B cell (primary cell): ENCODE measurements at regions of chr12 and their contacts with region 1.

Region 1: DNA sequence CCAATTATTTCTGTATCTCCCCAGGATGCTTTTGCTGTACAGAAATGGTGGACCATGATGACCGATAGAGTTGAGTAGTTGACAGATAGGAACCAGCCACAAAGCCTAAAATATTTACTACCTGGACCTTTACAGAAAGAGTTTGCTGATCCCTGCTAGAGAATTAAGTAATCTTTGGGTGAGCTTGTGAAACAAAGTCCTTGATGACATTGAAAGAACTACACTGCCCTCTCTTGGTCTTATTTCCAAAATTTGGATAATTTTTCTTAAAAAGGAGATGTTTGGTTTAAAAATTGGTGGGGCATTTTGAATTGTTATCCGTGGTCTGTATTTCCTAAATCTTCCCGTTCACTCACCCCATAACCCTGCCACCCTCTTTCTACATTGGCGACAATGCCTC is 13.7 kb upstream of the TCTN1 start:
- DNase-seq: peak; percentile 76
- ATAC-seq: peak; percentile 35
- H3K4me3 ChIP-seq: no peak overlapping the region
- H3K4me3 Mint-ChIP-seq: peak overlapping the region; percentile 7
- H3K27ac ChIP-seq: peak overlapping the region in 1 of 2 donors; percentile 43
- H3K27ac Mint-ChIP-seq: peak overlapping the region; percentile 75
- H3K4me1 ChIP-seq: peaks cover 45 to 53% of the 10 kb centered on the region in 2 donors
- H3K4me1 Mint-ChIP-seq: peaks cover 37% of the 10 kb centered on the region
- H3K27me3 ChIP-seq: no peaks in the 10 kb centered on the region
- H3K27me3 Mint-ChIP-seq: no peaks in the 10 kb centered on the region
- CTCF ChIP-seq: peak; percentile 63

Region 2: DNA sequence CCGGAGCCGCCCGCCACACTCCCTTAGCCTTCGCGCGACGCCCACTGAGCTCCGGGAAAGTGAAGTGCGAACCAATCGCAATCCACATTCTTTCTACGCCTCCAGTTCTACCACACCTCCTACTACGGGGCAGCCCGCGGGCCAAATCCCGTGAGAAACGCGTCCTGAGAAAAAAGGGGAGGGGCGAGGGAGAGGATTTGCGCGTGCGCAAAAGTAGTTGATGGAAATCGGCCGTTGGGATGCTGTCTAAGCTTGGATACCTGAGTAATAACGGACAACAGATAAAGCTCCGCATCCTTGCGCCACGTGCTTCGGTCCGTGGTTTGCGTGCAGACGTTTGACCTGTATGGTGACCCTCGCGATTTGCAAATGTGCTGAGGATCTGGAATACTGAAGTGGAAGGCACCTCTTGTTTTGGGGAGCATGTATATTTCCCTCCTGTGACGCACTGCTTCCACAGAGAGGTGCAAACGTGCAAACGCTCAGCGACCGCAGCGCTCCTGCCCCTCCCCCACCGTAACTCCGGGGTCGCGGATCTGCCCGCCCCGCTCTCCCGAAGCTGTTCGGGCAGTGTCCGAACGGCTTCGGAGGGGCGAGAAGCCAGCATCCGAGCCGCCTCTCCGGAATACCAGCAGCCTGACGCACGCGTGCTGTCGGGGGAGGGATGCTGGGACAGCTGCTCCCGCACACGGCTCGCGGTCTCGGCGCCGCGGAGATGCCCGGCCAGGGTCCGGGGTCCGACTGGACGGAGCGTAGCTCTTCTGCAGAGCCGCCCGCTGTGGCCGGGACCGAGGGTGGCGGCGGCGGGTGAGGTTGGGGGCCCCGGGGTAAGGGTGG is 131.8 kb before region 1 on chr12 and contains the starts of genes FAM216A and GPN3:
- CTCF ChIA-PET with region 1: interaction called, 80 read pairs
- POLR2A ChIA-PET with region 1: interaction called, 6 read pairs
- intact Hi-C with region 1: loop called (anchors 1 kb)
- DNase-seq: peak; percentile 97
- ATAC-seq: peak; percentile 91
- H3K4me3 ChIP-seq: peak within 1 kb of the TSS; percentile 72 to 100 (median 95)
- H3K4me3 Mint-ChIP-seq: peak within 1 kb of the TSS; percentile 100
- H3K27ac ChIP-seq: peak within 1 kb of the TSS; percentile 69 to 79
- H3K27ac Mint-ChIP-seq: peak within 1 kb of the TSS; percentile 98
- H3K4me1 ChIP-seq: peaks cover 22 to 24% of the 10 kb centered on the region in 2 donors
- H3K4me1 Mint-ChIP-seq: peaks cover 42% of the 10 kb centered on the region
- H3K27me3 ChIP-seq: no peaks in the 10 kb centered on the region
- H3K27me3 Mint-ChIP-seq: no peaks in the 10 kb centered on the region
- CTCF ChIP-seq: no peak
- total RNA-seq, gene FAM216A: 15.4 and 15.7 TPM in 2 replicates
- total RNA-seq, gene GPN3: 12.3 and 13.4 TPM in 2 replicates

Region 3: GRCh38 chr12:110531741-110532333 is 68.4 kb before region 1 on chr12:
- CTCF ChIA-PET with region 1: interaction called, 22 read pairs
- POLR2A ChIA-PET with region 1: interaction called, 10 read pairs
- intact Hi-C with region 1: no loop called
- DNase-seq: no peak
- ATAC-seq: no peak
- H3K4me3 ChIP-seq: no peak overlapping the region
- H3K4me3 Mint-ChIP-seq: no peak overlapping the region
- H3K27ac ChIP-seq: peak overlapping the region in 1 of 2 donors; percentile 2
- H3K27ac Mint-ChIP-seq: peak overlapping the region; percentile 22
- H3K4me1 ChIP-seq: peaks cover 0 to 3% of the 10 kb centered on the region in 2 donors
- H3K4me1 Mint-ChIP-seq: peaks cover 20% of the 10 kb centered on the region
- H3K27me3 ChIP-seq: no peaks in the 10 kb centered on the region
- H3K27me3 Mint-ChIP-seq: no peaks in the 10 kb centered on the region
- CTCF ChIP-seq: no peak

Region 4: DNA sequence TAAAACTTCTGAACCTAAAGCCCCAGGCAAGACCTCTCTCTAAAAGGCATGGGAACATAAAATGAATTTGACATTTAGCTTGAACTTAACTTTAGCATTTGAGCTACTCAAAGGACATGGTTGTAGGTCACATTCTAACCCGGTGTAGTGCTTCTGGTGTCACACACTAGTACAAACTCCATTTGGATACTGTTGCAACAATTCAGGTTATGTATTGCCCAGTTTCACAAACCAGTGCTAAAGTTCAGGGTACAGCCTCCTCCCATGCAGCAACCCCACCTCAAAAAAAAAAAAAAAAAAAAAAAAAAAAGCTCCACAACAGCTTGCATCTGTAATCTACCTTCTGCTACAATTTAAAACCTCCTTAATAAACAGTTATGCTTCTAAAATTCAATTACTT is 24.9 kb before region 1 on chr12:
- CTCF ChIA-PET with region 1: interaction called, 39 read pairs
- POLR2A ChIA-PET with region 1: no interaction called
- intact Hi-C with region 1: no loop called
- DNase-seq: no peak
- ATAC-seq: no peak
- H3K4me3 ChIP-seq: no peak overlapping the region
- H3K4me3 Mint-ChIP-seq: peak overlapping the region; percentile 45
- H3K27ac ChIP-seq: peak overlapping the region in 1 of 2 donors; percentile 46
- H3K27ac Mint-ChIP-seq: peak overlapping the region; percentile 50
- H3K4me1 ChIP-seq: peaks cover 33 to 41% of the 10 kb centered on the region in 2 donors
- H3K4me1 Mint-ChIP-seq: peaks cover 53% of the 10 kb centered on the region
- H3K27me3 ChIP-seq: no peaks in the 10 kb centered on the region
- H3K27me3 Mint-ChIP-seq: no peaks in the 10 kb centered on the region
- CTCF ChIP-seq: no peak

Region 5: DNA sequence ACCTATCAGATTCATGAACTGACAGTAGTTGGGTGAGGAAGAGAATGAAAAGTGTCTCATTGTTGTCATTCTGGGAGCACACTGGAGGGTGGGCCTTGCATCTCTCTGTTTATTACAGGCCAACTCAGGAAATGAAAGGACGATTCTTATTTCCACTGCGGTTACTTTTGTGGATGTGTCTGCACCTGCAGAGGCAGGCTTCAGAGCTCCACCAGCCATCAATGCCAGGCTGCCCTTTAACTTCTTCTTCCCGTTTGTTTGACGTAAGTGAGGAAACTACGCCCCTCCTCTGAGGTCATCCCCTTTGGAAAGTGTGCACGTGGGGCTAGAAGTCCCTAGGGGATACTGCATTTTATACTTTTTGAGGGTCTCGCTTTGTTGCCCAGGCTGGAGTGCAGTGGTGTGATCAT is 47.4 kb after region 1 on chr12:
- CTCF ChIA-PET with region 1: interaction called, 21 read pairs
- POLR2A ChIA-PET with region 1: interaction called, 7 read pairs
- intact Hi-C with region 1: loop called (anchors 1 kb)
- DNase-seq: peak; percentile 95
- ATAC-seq: peak; percentile 85
- H3K4me3 ChIP-seq: peak overlapping the region in 1 of 5 experiments; percentile 5
- H3K4me3 Mint-ChIP-seq: peak overlapping the region; percentile 79
- H3K27ac ChIP-seq: peak overlapping the region; percentile 90
- H3K27ac Mint-ChIP-seq: peak overlapping the region; percentile 98
- H3K4me1 ChIP-seq: peaks cover 90% of the 10 kb centered on the region in 2 donors
- H3K4me1 Mint-ChIP-seq: peaks cover 91% of the 10 kb centered on the region
- H3K27me3 ChIP-seq: no peaks in the 10 kb centered on the region
- H3K27me3 Mint-ChIP-seq: no peaks in the 10 kb centered on the region
- CTCF ChIP-seq: no peak

Region 6: DNA sequence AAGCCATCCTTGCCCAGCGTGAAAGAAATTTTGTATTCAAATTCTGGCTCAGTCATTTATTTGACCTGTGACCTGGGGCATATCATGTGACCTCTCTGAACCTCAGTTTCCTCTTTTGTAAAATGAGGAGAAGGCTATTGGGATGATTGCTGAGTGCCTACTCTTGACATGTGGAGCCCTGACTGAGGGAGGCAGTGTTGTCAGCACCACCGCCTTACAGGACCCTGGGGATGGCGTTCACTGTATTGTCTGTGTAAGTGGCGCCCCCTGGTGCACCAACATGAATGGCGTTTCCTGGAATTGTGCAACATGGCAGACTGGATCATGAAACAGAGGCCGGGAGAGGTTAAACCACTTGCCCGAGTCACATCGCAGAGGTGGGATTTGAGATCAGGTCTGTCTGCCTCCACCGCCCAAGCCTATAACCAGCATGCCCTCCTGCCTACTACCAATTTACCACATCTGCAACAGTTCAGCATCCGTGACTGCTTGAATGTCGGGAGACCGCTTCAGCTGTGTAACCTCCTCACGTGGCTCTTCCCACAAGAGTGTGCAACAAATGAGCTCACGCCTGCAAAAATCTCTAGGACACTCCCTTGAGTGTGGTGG is 226.4 kb after region 1 on chr12:
- CTCF ChIA-PET with region 1: interaction called, 43 read pairs
- POLR2A ChIA-PET with region 1: interaction called, 3 read pairs
- intact Hi-C with region 1: loop called (anchors 1 kb)
- DNase-seq: peak; percentile 90
- ATAC-seq: peak; percentile 99
- H3K4me3 ChIP-seq: peak overlapping the region in 4 of 5 experiments; percentile 9 to 44 (median 28)
- H3K4me3 Mint-ChIP-seq: peak overlapping the region; percentile 72
- H3K27ac ChIP-seq: no peak overlapping the region
- H3K27ac Mint-ChIP-seq: no peak overlapping the region
- H3K4me1 ChIP-seq: peaks cover 6 to 7% of the 10 kb centered on the region in 2 donors
- H3K4me1 Mint-ChIP-seq: peaks cover 6% of the 10 kb centered on the region
- H3K27me3 ChIP-seq: no peaks in the 10 kb centered on the region
- H3K27me3 Mint-ChIP-seq: peaks cover 10% of the 10 kb centered on the region
- CTCF ChIP-seq: peak; percentile 80